ENCODE measurements at regions of chr2 and their contacts with region 1.

Region 1: GRCh38 chr2:160221749-160222148 is 21.7 kb upstream of the ITGB6 start:
- DNase-seq: no peak
- CTCF ChIP-seq: no peak

Region 2: DNA sequence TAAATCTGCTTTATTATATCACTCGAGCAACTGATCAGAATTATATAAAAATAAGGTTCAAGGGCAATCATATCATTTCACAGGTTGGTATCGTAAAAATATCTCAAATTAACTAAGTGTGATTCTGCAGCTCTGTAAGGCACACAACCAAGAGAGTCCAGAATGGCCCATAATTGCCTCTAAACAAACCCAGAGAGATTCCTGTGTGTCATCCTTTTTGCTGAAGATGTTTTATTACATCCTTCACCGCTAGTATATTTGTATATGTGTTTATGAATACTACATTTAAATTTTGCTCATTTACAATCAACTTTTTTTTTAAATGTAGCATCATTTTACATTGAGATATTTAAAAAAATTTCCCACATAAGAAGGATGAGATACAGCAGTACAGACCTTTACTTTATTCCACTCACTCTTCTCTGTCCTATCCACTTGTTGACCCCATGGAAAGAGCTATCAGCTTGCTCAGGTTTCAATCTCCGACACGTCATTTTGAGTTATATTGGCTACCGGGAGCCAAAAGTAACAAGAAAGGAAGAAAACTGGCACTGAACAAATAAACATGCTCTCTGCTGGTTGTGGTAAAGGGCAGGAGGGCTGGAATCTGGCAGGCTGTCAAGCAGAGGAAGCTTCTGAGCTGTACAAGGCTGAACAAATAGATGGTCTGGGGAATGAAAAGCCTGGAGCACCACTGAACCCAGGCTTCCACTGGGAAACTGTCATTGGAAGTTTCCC is 182.4 kb before region 1 on chr2:
- CTCF ChIA-PET with region 1: no interaction called
- POLR2A ChIA-PET with region 1: no interaction called
- DNase-seq: no peak
- CTCF ChIP-seq: no peak

Region 3: DNA sequence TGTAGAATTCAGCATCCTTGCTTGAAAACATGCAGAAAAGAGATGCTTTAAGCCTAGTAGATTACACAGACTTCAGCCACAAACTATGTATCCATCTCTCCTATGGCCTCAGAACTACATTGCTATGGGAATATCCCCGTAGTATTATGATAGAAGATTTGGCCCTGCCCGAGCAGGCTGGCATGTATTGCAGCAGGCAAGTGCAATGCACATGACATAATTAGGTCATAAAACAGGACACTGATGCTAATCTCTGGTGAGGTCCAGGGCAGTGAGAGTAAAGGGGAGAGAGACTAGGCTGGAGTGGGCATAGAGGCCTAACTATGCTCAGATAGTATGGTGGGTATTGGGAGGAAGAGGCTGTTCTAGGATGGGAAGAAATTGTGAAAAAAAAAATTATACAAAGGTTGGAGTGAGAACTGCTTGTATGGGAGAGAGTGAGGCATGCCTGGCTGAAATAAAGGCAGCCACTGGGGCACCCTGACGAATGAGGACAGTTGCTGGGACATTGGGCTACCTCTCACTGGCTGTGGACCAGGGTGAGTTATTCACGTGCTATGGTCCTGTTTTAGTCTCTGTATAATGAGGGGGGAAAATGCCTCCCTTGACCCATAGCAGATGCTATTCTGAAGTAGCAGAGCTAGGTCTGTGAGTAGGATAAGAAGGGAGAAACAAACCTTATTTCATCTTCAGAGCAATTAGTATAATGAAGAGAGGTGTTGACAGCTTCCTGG is 157.7 kb before region 1 on chr2:
- CTCF ChIA-PET with region 1: no interaction called
- POLR2A ChIA-PET with region 1: no interaction called
- DNase-seq: no peak
- CTCF ChIP-seq: no peak

Region 4: DNA sequence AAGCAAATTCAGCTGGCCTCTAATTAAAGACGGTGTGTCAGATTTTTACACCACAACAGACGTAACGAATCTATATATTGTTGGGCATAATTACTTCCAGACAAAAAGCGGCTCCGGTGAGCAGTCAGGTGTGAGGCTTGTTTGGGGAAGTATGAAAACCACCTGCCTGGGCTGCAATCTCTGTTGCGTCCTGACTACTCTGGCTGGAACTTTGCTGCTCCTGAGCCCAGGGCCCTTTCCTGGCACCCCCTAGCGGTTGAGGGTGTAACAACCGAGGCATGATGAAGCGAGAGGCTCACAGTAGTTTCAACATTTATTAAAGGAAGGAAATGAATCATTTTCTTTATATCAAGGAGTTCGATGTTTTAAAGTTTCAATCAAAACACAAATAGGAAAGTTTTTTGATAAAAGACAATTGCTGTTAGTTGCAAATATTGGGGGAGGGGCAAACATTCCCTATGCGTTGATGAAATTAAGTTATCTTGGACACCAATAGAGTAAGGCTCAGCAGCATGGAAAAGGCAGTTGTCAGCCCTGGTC is 11.1 kb before region 1 on chr2:
- CTCF ChIA-PET with region 1: interaction called, 22 read pairs
- POLR2A ChIA-PET with region 1: no interaction called
- DNase-seq: peak; percentile 77
- CTCF ChIP-seq: peak; percentile 88

Region 5: GRCh38 chr2:160970052-160970965 is 748.6 kb after region 1 on chr2:
- CTCF ChIA-PET with region 1: no interaction called
- POLR2A ChIA-PET with region 1: no interaction called
- DNase-seq: no peak
- CTCF ChIP-seq: peak; percentile 36

Measured in GM10248 (cell line).